Kidney (tissue), 22 donors: ENCODE measurements at regions of chr10 and their contacts with region 1.

Region 1: DNA sequence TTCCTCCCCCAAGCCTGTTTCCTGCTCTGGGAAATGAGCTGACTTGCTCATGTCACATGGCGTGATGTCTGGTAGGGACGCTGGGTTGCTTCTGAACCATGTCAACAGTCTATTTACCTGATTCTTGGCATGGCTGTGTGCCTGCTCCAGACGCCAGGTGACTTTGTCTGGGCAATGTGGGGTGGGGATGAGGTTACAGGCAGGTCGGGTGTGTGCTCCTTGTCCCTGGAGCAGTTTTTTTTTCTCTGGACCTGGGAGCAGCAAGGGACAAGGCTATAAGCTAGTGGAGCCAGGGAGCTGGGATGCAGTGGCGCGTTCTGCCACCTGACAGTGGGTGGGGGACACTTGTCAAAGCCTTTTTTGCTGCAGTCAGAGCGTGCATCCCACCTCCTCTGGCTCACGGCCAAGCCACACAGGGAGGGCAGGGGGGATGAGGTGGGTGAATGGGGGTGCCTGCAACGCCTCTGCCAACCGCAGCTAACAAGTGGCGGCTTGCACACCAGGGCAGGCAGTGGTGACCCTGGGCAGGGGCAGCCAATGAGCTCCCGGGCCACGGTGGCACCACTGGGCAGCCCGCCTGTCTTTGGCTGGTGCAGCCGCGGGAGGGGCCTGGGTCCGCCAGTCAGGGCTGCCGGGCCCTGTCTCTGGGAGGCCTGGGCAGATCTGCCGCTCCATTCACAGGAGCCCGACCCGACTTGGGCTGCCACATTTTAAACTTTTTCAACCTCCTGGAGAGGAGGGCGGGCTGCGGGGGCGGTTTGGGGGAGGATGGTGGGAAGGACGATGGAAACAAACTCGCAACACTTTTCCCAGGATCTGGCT is 22.9 kb downstream of the DNAJB12 start:
- DNase-seq: peak; percentile 95 to 98 (median 97)
- H3K4me3 ChIP-seq: peak overlapping the region in 1 of 3 donors; percentile 13
- H3K27ac ChIP-seq: peak overlapping the region; percentile 87 to 89
- H3K4me1 ChIP-seq: peaks cover 6 to 71% (median 59%) of the 10 kb centered on the region in 3 donors
- H3K27me3 ChIP-seq: no peaks in the 10 kb centered on the region
- CTCF ChIP-seq: peak; percentile 30

Region 2: DNA sequence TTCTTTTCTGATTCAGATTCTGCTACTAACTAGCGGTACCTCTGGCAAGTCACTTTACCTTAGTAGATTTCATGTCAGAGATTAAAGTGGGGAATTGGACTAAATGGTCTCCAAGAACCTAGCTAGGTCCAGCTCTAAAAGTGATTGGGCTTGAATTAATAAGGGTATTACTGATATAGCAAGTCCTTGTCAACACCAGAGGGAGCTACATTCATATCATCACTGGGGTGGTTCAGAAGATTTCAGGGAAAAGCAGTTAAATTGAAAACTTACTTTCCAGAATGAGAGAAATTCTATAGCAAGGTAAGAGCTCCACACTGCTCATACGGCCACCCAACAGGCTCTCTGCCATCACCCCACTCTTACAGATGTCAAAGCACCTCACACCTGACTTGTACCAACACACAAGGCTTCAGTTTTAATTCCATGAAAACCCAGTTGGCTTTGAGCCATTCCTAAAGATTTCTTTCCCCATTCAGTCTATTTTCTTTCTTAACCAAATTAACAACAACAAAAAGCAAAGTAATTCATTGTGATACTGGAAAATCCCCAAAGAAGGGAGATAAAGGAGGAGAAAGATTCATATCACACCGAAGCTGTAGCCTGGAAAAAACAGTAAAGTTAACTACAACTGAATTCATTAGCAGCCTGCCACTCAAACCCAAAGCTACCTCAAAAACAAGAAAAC is 205.5 kb before region 1 on chr10:
- intact Hi-C with region 1: loop called (anchors 10 kb)
- DNase-seq: peak in 1 of 5 donors; percentile 28
- H3K4me3 ChIP-seq: no peak overlapping the region
- H3K27ac ChIP-seq: no peak overlapping the region
- H3K4me1 ChIP-seq: no peaks in the 10 kb centered on the region
- H3K27me3 ChIP-seq: no peaks in the 10 kb centered on the region
- CTCF ChIP-seq: peak; percentile 23

Region 3: DNA sequence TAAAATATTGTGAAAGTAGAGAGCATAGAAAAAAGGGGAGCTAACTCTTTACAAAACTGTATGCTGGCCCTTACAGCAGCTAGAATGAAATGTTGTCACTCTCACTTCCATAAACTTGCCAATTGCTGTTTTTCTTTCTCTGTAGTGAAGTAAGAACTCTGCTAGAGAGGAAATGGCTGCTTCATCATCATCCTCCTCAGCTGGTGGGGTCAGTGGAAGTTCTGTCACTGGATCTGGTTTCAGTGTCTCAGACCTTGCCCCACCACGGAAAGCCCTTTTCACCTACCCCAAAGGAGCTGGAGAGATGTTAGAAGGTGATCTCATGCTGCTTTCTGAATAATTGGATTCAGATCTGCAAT is 108.1 kb before region 1 on chr10:
- intact Hi-C with region 1: loop called (anchors 10 kb)
- DNase-seq: peak in 1 of 5 donors; percentile 15
- H3K4me3 ChIP-seq: no peak overlapping the region
- H3K27ac ChIP-seq: peak overlapping the region in 1 of 2 donors; percentile 84
- H3K4me1 ChIP-seq: peaks cover 0 to 10% (median 5%) of the 10 kb centered on the region in 3 donors
- H3K27me3 ChIP-seq: no peaks in the 10 kb centered on the region
- CTCF ChIP-seq: no peak

Region 4: DNA sequence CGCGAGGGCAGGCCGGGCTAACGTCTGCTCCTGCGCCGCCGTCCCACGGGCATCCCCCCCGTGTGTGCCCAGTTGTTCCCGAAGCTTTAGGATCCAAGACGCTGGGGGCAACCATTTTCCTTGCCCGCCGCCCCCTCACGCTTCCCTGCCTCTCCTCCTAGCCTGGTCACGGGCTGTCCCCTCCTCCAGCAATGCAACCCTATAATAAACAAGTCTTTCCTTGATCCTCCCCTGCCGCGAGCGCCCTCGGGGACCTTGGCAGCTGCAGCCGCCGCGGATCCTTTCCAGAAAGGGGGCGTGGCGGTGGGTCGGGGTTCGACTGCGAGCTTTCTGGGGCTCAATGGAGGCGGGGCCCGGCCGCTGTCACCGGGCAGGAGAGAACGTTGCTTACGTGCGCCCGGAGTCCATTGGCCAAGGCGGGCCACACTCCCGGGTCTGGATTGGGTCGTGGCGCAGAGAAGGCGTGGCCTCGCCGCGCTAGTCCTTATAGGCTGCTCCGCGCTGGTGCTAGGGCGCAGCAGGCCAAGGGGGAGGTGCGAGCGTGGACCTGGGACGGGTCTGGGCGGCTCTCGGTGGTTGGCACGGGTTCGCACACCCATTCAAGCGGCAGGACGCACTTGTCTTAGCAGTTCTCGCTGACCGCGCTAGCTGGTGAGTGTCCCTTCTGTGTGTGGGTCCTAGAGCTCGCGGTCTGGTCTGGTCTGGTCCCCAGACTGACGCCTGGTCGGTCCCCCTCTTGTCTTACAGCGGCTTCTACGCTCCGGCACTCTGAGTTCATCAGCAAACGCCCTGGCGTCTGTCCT is 58.2 kb before region 1 on chr10 and contains the start of gene DDIT4:
- intact Hi-C with region 1: loop called (anchors 10 kb)
- DNase-seq: peak; percentile 99 to 100 (median 99)
- H3K4me3 ChIP-seq: peak within 1 kb of the TSS; percentile 97 to 98 (median 98)
- H3K27ac ChIP-seq: peak within 1 kb of the TSS; percentile 99
- H3K4me1 ChIP-seq: peaks cover 0 to 11% (median 8%) of the 10 kb centered on the region in 3 donors
- H3K27me3 ChIP-seq: no peaks in the 10 kb centered on the region
- CTCF ChIP-seq: no peak
- total RNA-seq, gene DDIT4: 292 TPM

Region 5: DNA sequence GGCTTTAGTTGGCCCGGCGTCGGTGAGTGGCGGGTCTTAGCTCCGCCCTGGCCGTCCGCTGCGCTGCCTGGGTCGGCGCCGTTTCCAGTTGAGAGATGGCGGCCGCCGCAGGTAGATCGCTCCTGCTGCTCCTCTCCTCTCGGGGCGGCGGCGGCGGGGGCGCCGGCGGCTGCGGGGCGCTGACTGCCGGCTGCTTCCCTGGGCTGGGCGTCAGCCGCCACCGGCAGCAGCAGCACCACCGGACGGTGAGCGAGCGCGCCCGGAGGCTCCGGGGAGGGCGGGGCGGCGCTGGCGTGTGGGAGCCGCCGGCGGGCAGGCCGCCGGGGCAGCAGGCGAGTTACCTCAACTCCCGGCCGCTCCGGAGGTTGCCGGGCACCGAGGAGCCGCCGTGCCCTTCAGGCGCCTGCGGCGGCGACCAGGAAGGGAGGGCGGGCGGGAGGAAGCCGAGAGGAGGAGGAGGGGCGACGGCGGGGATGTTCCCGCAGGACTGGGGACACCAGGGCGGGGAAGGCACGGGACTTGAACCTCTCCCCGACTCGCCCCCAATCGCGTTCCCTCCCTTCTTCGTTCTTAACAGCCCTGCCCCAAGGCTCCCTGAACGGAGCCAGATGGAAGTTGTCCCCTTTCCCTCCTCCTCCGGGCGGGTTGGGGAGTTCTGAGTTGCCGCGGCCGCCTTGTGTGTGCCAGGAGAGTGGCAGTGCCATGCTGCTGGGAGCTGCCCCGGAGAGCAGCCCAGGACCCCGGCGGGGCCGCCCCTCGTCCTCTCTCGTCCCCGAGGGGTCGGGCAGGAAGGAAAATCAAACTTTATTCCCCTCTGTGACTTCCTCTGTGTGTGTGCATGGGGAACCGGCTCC is 360.5 kb after region 1 on chr10 and contains the start of gene MCU:
- intact Hi-C with region 1: no loop called
- DNase-seq: peak; percentile 96 to 98 (median 97)
- H3K4me3 ChIP-seq: peak within 1 kb of the TSS; percentile 79 to 83 (median 82)
- H3K27ac ChIP-seq: peak within 1 kb of the TSS; percentile 75 to 90
- H3K4me1 ChIP-seq: peaks cover 0 to 13% (median 2%) of the 10 kb centered on the region in 3 donors
- H3K27me3 ChIP-seq: no peaks in the 10 kb centered on the region
- CTCF ChIP-seq: no peak
- total RNA-seq, gene MCU: 37.6 TPM